Panc1 (cell line): ENCODE measurements at regions of chr11 and their contacts with region 1.

Region 1: DNA sequence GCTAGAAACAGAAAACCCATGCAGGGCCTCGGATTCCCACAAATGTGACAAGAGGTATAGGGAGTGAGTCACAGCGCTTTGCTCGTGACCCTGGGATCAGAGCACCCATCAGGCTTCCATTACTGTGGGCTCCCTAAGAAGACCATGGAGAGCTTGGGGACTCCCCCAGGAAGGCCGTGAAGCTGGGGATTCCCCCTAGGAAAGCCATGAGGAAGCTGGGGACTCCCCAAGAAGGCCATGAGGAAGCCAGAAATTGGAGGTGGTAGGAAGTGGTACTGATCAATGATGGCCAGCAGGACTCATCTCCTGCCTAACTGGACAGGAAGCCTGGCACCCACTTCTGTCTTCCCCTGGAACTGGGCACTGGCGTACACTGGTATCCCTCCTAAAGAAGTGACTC is 10.1 kb upstream of the DCPS start:
- DNase-seq: no peak
- ATAC-seq: 0 out of 2 replicates have a peak, but pooled peaks have one; percentile 10
- H3K4me3 ChIP-seq: no peak overlapping the region
- H3K27ac ChIP-seq: no peak overlapping the region
- H3K4me1 ChIP-seq: no peaks in the 10 kb centered on the region
- H3K27me3 ChIP-seq: no peaks in the 10 kb centered on the region
- CTCF ChIP-seq: no peak

Region 2: GRCh38 chr11:126211235-126212088 is 82.3 kb before region 1 on chr11 and contains the starts of genes FAM118B and RPUSD4:
- CTCF ChIA-PET with region 1: no interaction called
- POLR2A ChIA-PET with region 1: no interaction called
- in situ Hi-C with region 1: no loop called
- intact Hi-C with region 1: no loop called
- DNase-seq: peak; percentile 69
- ATAC-seq: peak; percentile 98
- H3K4me3 ChIP-seq: peak within 1 kb of the TSS; percentile 87 to 99
- H3K27ac ChIP-seq: peak within 1 kb of the TSS; percentile 90
- H3K4me1 ChIP-seq: peaks cover 26% of the 10 kb centered on the region
- H3K27me3 ChIP-seq: no peaks in the 10 kb centered on the region
- CTCF ChIP-seq: no peak
- total RNA-seq, gene FAM118B: 41.6 TPM
- total RNA-seq, gene RPUSD4: 52.3 TPM

Region 3: DNA sequence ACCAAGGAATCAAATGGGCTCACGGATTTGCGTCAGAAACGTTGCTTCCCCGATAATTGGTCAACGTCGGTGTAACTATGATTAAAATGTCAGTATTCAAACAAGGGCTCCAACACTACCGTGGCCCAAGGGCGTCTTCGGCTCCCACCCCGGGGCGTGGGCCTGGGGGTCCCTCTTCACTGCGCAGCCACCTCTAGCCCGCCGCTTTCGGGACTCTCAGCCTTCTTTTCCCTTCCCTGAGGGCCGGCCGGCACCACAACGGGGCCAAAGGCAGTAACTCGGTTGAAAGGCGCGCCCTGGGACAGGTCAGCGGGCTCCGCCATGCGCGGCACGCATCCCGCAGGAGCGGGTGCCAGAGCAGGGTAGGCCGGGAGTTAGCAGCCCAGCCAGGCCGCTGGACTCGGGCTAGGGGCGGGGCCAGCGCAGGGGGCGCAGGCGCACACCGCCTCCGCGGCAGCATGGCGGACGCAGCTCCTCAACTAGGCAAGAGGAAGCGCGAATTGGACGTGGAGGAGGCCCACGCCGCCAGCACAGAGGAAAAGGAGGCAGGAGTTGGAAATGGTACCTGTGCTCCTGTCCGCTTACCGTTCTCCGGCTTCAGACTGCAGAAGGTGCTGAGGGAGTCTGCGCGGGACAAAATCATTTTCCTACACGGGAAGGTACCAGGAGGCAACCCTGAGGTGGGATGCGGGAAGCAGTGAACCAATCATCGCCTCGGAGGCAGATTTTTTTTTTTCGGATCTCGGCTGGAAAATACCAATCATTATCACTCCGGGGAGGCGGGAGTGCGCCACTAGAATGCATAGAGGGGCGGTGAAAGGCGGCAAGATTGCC is 10.1 kb after region 1 on chr11 and contains the start of gene DCPS:
- CTCF ChIA-PET with region 1: no interaction called
- POLR2A ChIA-PET with region 1: interaction called, 11 read pairs
- in situ Hi-C with region 1: no loop called
- intact Hi-C with region 1: no loop called
- DNase-seq: no peak
- ATAC-seq: peak; percentile 99
- H3K4me3 ChIP-seq: peak within 1 kb of the TSS; percentile 72 to 75
- H3K27ac ChIP-seq: peak within 1 kb of the TSS; percentile 98
- H3K4me1 ChIP-seq: peaks cover 7% of the 10 kb centered on the region; the same call in 1 of the 2 replicates
- H3K27me3 ChIP-seq: no peaks in the 10 kb centered on the region
- CTCF ChIP-seq: no peak
- total RNA-seq, gene DCPS: 34.8 TPM

Region 4: GRCh38 chr11:126332131-126332711 is 38.5 kb after region 1 on chr11:
- CTCF ChIA-PET with region 1: no interaction called
- POLR2A ChIA-PET with region 1: no interaction called
- in situ Hi-C with region 1: no loop called
- intact Hi-C with region 1: no loop called
- DNase-seq: no peak
- ATAC-seq: peak; percentile 20; the same call in 1 of the 2 replicates
- H3K4me3 ChIP-seq: no peak overlapping the region
- H3K27ac ChIP-seq: no peak overlapping the region
- H3K4me1 ChIP-seq: no peaks in the 10 kb centered on the region; the same call in 1 of the 2 replicates
- H3K27me3 ChIP-seq: no peaks in the 10 kb centered on the region
- CTCF ChIP-seq: no peak